Mucosa of descending colon (tissue), 3 donors: ENCODE measurements at regions of chr4 and their contacts with region 1.

Region 1: DNA sequence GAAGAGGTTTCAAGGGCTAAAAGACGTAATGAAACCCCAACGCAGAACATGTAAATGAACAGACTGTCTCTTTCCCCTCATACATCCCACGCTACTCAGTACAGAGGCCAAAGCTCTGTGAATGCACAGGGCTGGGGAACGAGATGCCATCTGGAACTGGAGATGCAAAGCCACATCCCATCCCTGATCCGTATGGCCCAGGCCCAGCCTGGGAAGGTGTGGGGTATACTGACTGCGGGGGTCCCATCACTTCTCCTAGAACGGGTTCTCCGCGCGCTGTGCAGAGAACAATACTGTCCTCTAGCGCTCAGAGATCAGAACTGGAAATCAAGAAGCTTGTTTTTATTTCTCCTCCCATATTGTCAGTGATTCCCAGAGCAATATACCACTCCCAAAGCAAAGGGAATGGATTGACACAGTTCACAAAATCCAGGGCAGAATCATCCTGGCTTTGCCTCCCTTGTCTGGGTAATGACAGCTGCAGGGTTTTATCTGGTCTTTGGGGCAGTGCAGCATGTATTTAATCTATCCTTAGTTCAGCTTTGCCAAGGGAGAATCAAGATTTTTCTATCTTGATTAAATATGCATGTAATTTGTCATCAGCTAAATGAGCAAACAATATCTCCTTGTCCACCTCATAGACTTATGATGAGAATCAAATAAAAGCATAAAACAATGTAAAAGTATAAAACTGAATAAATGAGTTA is 47.3 kb upstream of the TLR3 start:
- DNase-seq: peak in 2 of 3 donors; percentile 26 to 40
- ATAC-seq: peak; percentile 50
- H3K4me3 ChIP-seq: no peak overlapping the region
- H3K4me1 ChIP-seq: no peaks in the 10 kb centered on the region
- CTCF ChIP-seq: peak; percentile 44

Region 2: DNA sequence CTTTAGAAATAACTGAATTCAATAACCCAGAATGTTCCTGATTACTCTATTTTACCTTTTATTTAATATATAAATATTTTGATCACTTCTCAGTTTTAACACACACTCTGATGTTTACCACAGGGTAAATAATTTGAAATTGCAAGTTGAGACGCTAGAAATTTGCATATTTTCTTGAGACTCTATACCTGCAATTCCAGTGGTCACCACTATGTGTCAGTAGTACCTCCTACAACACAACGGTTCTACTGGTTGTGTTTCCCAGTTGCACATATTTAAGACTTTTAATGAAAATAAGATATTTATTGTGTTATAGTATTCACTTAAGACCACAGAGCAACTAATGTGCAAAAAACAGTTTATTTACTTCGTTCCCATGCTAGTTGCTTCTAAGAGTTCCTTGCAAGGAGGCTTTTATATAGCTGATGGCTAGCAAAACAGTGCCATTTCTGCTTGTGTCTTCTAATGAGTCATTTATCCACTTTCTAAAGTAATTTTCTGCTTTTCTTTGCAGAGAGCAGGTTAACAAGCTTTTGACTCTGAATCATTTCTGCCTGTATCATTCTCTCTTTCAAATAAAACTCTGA is 387.5 kb before region 1 on chr4:
- intact Hi-C with region 1: loop called in 1 of 2 experiments (anchors 10 kb)
- DNase-seq: peak in 1 of 3 donors; percentile 36
- ATAC-seq: no peak
- H3K4me3 ChIP-seq: no peak overlapping the region
- H3K4me1 ChIP-seq: no peaks in the 10 kb centered on the region
- CTCF ChIP-seq: peak; percentile 3

Region 3: GRCh38 chr4:185640811-185641675 is 380.6 kb before region 1 on chr4:
- intact Hi-C with region 1: loop called (anchors 5 to 10 kb)
- DNase-seq: peak in 1 of 3 donors; percentile 69
- ATAC-seq: no peak
- H3K4me3 ChIP-seq: no peak overlapping the region
- H3K4me1 ChIP-seq: no peaks in the 10 kb centered on the region
- CTCF ChIP-seq: peak; percentile 8

Region 4: GRCh38 chr4:185966997-185967775 is 54.4 kb before region 1 on chr4:
- intact Hi-C with region 1: no loop called
- DNase-seq: no peak
- ATAC-seq: no peak
- H3K4me3 ChIP-seq: no peak overlapping the region
- H3K4me1 ChIP-seq: no peaks in the 10 kb centered on the region
- CTCF ChIP-seq: no peak

Region 5: DNA sequence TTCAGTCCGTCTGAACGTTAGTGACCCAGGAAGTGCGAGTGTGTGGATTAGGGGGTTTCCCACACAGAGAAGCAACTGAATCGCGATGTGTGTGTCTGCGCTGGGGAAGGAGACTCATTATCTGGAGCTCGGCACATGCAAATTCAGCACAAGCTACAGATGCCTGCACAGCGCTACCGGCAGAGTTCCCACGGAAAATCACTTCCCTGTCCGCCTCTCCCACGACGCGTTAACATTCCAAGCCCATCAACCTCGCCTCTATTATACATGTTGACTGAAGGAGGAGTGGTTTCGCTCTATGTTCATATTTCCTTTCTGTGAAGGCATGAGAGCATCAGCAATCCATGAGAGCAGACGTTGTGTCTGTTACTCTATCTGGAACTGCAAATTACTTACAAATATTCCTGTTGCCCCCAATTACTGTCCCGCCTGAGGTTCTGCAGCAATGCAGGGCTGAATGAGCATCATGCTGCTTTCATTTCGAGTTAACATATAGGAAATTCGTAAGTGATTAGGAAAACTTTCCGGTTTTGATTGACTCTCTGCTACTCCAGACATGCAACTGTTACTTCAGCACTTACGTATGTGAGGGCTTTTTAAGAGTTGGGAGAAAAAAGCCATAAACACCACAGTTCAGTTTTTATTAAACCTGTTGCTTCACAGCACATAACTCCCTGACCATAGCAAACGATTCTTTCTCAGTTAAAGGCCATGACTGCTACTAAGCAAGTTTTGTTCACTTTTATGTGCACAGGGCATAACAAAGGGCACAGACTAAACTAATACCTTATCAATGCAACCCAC is 548.8 kb after region 1 on chr4:
- intact Hi-C with region 1: no loop called
- DNase-seq: peak; percentile 66 to 78 (median 69)
- ATAC-seq: peak; percentile 92
- H3K4me3 ChIP-seq: no peak overlapping the region
- H3K4me1 ChIP-seq: peaks cover 7% of the 10 kb centered on the region
- CTCF ChIP-seq: no peak